CD4-positive, alpha-beta T cell (primary cell): ENCODE measurements at regions of chr3 and their contacts with region 1.

Region 1: DNA sequence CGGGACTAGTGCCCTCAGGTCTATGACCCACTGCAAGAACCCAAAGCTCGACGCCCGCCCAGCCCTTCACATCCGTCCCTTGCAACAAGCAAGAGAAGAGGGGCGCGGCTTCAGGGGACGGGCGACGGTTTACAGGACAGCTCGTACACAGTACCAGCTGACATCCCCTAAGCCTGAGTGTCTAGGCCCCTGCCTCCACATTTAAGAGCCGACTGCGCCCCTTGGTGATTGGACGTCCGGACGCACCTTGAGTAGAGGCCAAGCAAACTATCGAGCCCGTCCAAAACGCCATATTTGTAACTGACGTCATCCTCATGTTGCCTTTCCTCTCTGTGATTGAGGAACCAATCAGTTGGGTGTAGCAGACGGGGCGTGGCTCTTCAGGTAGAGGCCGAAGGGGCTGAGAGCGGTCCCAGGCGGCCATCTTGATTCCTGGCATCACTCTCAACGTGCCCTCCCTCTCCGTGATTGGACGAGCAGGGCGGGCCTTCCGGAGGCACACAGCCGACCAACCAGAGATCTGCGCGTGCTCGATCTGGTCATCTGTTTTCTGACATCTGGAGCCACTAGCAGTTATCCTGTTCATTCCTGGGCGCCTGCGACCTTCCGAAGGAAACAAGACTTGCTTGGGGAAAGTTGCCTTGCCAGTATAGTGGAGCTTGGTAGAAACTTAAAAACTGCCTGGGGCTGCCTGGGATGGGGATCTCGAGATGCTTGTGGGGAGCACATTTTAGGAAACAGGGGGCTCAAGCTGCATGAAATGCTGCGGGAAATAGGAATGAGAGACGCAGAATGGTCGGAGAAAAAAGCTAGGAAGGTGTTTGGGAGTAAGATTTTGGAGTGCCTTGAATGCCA is 4.0 kb upstream of the RPL14 start:
- DNase-seq: peak; percentile 87 to 99 (median 94)
- ATAC-seq: peak; percentile 90
- H3K4me3 ChIP-seq: peak overlapping the region; percentile 84
- H3K4me3 Mint-ChIP-seq: peak overlapping the region; percentile 88
- H3K27ac ChIP-seq: peak overlapping the region; percentile 88 to 97
- H3K27ac Mint-ChIP-seq: peak overlapping the region; percentile 91
- H3K4me1 ChIP-seq: peaks cover 31% of the 10 kb centered on the region
- H3K4me1 Mint-ChIP-seq: peaks cover 43% of the 10 kb centered on the region
- H3K27me3 ChIP-seq: no peaks in the 10 kb centered on the region
- H3K27me3 Mint-ChIP-seq: no peaks in the 10 kb centered on the region
- CTCF ChIP-seq: no peak

Region 2: GRCh38 chr3:39383045-39383880 is 1069.8 kb before region 1 on chr3 and contains the start of gene SLC25A38:
- CTCF ChIA-PET with region 1: no interaction called
- POLR2A ChIA-PET with region 1: no interaction called
- intact Hi-C with region 1: loop called in 1 of 2 experiments (anchors 10 kb)
- DNase-seq: peak; percentile 58 to 94 (median 75)
- ATAC-seq: peak; percentile 82
- H3K4me3 ChIP-seq: peak within 1 kb of the TSS; percentile 95
- H3K4me3 Mint-ChIP-seq: peak within 1 kb of the TSS; percentile 94
- H3K27ac ChIP-seq: peak within 1 kb of the TSS; percentile 93 to 97
- H3K27ac Mint-ChIP-seq: peak within 1 kb of the TSS; percentile 97
- H3K4me1 ChIP-seq: peaks cover 53% of the 10 kb centered on the region
- H3K4me1 Mint-ChIP-seq: peaks cover 55% of the 10 kb centered on the region
- H3K27me3 ChIP-seq: no peaks in the 10 kb centered on the region
- H3K27me3 Mint-ChIP-seq: no peaks in the 10 kb centered on the region
- CTCF ChIP-seq: peak; percentile 59
- total RNA-seq, gene SLC25A38: 43.2 to 44.7 TPM

Region 3: GRCh38 chr3:39515681-39516441 is 937.2 kb before region 1 on chr3:
- CTCF ChIA-PET with region 1: no interaction called
- POLR2A ChIA-PET with region 1: no interaction called
- intact Hi-C with region 1: no loop called
- DNase-seq: no peak
- ATAC-seq: no peak
- H3K4me3 ChIP-seq: no peak overlapping the region
- H3K4me3 Mint-ChIP-seq: no peak overlapping the region
- H3K27ac ChIP-seq: no peak overlapping the region
- H3K27ac Mint-ChIP-seq: no peak overlapping the region
- H3K4me1 ChIP-seq: no peaks in the 10 kb centered on the region
- H3K4me1 Mint-ChIP-seq: no peaks in the 10 kb centered on the region
- H3K27me3 ChIP-seq: peaks cover 0 to under 1% of the 10 kb centered on the region in 2 experiments
- H3K27me3 Mint-ChIP-seq: peaks cover 50% of the 10 kb centered on the region
- CTCF ChIP-seq: no peak

Region 4: GRCh38 chr3:40309418-40309924 is 143.6 kb before region 1 on chr3 and contains the start of gene EIF1B:
- CTCF ChIA-PET with region 1: interaction called, 6 read pairs
- POLR2A ChIA-PET with region 1: interaction called, 16 read pairs
- intact Hi-C with region 1: loop called (anchors 1 to 2 kb)
- DNase-seq: peak; percentile 96 to 99 (median 98)
- ATAC-seq: peak; percentile 89
- H3K4me3 ChIP-seq: peak within 1 kb of the TSS; percentile 93
- H3K4me3 Mint-ChIP-seq: peak within 1 kb of the TSS; percentile 100
- H3K27ac ChIP-seq: peak within 1 kb of the TSS; percentile 91 to 95
- H3K27ac Mint-ChIP-seq: peak within 1 kb of the TSS; percentile 100
- H3K4me1 ChIP-seq: peaks cover 11% of the 10 kb centered on the region
- H3K4me1 Mint-ChIP-seq: peaks cover 50% of the 10 kb centered on the region
- H3K27me3 ChIP-seq: no peaks in the 10 kb centered on the region
- H3K27me3 Mint-ChIP-seq: no peaks in the 10 kb centered on the region
- CTCF ChIP-seq: peak; percentile 90
- total RNA-seq, gene EIF1B: 112 to 120 TPM

Region 5: DNA sequence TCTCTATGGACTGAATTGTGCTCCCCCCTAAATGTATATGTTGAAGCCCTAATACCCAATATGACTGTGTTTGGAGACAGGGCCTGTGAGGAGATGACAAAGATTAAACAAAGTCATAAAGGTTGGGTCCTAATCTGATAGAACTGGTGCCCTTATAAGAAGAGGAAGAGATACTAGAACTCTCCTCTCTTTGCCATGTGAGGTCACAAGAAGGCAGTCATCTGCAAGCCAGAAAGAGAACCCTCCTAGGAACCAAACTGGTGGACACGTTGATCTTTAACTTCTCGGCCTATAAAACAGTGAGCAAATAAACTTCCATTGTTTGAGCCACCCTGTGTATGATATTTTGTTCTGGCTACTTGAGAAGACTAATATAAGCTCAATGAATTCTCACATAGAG is 97.7 kb before region 1 on chr3:
- CTCF ChIA-PET with region 1: no interaction called
- POLR2A ChIA-PET with region 1: no interaction called
- intact Hi-C with region 1: no loop called
- DNase-seq: no peak
- ATAC-seq: no peak
- H3K4me3 ChIP-seq: no peak overlapping the region
- H3K4me3 Mint-ChIP-seq: no peak overlapping the region
- H3K27ac ChIP-seq: no peak overlapping the region
- H3K27ac Mint-ChIP-seq: no peak overlapping the region
- H3K4me1 ChIP-seq: no peaks in the 10 kb centered on the region
- H3K4me1 Mint-ChIP-seq: no peaks in the 10 kb centered on the region
- H3K27me3 ChIP-seq: peaks cover 2 to 5% of the 10 kb centered on the region in 2 experiments
- H3K27me3 Mint-ChIP-seq: peaks cover 43% of the 10 kb centered on the region
- CTCF ChIP-seq: no peak

Region 6: DNA sequence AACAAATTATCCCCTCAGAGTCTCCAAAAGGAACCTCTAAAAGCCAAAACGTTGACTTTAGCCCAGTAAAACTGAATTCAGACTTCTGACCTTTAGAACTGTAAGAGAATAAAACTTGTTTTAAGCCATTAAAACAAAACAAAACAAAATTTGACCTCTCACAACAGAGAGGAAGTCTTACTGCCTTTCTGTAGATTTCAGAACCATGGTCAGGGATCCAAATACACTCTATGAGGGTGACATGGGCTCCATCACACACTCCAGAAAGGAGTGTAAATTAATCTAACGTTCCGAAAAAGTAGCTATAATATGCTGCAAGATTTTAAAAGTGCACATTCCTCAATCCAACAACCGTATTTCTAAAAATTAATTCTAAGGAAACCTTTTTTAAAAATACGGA is 15.2 kb before region 1 on chr3:
- CTCF ChIA-PET with region 1: no interaction called
- POLR2A ChIA-PET with region 1: no interaction called
- intact Hi-C with region 1: no loop called
- DNase-seq: no peak
- ATAC-seq: no peak
- H3K4me3 ChIP-seq: no peak overlapping the region
- H3K4me3 Mint-ChIP-seq: no peak overlapping the region
- H3K27ac ChIP-seq: no peak overlapping the region
- H3K27ac Mint-ChIP-seq: no peak overlapping the region
- H3K4me1 ChIP-seq: no peaks in the 10 kb centered on the region
- H3K4me1 Mint-ChIP-seq: no peaks in the 10 kb centered on the region
- H3K27me3 ChIP-seq: no peaks in the 10 kb centered on the region
- H3K27me3 Mint-ChIP-seq: no peaks in the 10 kb centered on the region
- CTCF ChIP-seq: no peak

Region 7: DNA sequence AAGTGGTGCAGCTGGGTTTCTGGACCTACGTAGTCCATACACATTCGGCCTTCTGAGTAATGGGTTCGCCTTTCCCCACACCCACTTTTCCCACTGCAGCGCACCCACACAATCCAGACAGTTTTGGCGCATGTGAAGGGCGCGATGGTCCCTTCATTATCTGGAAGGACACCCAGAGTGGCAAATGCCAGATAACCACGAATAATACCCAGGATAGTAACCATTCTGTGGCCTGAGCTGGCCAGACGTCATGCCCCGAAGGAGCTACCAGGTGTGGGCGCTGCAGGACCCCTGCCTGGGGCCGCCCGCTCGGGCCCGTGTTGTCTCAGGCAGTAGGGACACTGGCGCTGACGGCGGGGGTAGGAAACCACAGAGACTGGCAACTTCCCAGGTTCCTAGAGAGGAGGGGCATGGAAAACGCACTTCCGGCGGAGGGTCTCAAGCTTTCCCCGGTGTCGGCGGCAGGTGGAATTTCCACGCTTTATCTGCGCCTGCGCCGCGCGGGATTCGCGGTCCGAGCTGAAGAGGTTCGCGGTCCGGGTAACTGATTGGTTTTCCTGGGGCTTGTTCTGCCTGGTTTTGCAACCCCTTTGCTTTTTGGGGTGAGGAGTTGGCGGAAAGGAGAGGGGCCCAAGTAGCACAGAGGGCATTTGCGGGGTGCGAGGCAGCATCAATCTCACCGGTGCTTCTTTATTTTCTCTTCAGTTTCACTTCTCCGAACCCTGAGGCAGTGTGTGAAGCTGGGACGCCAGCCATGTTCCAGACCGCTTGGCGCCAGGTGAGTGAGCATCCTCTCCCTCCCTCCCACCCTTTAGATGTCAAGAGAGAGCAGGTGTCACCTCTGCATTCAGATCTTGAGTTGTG is 52.7 kb after region 1 on chr3 and contains the start of gene ZNF620:
- CTCF ChIA-PET with region 1: interaction called, 6 read pairs
- POLR2A ChIA-PET with region 1: interaction called, 16 read pairs
- intact Hi-C with region 1: no loop called
- DNase-seq: peak; percentile 5 to 73 (median 36)
- ATAC-seq: peak; percentile 69
- H3K4me3 ChIP-seq: peak within 1 kb of the TSS; percentile 83
- H3K4me3 Mint-ChIP-seq: peak within 1 kb of the TSS; percentile 97
- H3K27ac ChIP-seq: no peak within 1 kb of the TSS
- H3K27ac Mint-ChIP-seq: peak within 1 kb of the TSS; percentile 70
- H3K4me1 ChIP-seq: peaks cover 7% of the 10 kb centered on the region
- H3K4me1 Mint-ChIP-seq: peaks cover 23% of the 10 kb centered on the region
- H3K27me3 ChIP-seq: no peaks in the 10 kb centered on the region
- H3K27me3 Mint-ChIP-seq: no peaks in the 10 kb centered on the region
- CTCF ChIP-seq: peak; percentile 31
- total RNA-seq, gene ZNF620: 0.82 to 1.0 TPM

Region 8: GRCh38 chr3:41198950-41199865 is 746.1 kb after region 1 on chr3 and contains the start of gene CTNNB1:
- CTCF ChIA-PET with region 1: no interaction called
- POLR2A ChIA-PET with region 1: interaction called, 9 read pairs
- intact Hi-C with region 1: loop called in 1 of 2 experiments (anchors 2 kb)
- DNase-seq: peak; percentile 86 to 97 (median 91)
- ATAC-seq: peak; percentile 81
- H3K4me3 ChIP-seq: peak within 1 kb of the TSS; percentile 90
- H3K4me3 Mint-ChIP-seq: peak within 1 kb of the TSS; percentile 98
- H3K27ac ChIP-seq: peak within 1 kb of the TSS; percentile 90
- H3K27ac Mint-ChIP-seq: peak within 1 kb of the TSS; percentile 94
- H3K4me1 ChIP-seq: peaks cover 16% of the 10 kb centered on the region
- H3K4me1 Mint-ChIP-seq: peaks cover 45% of the 10 kb centered on the region
- H3K27me3 ChIP-seq: no peaks in the 10 kb centered on the region
- H3K27me3 Mint-ChIP-seq: no peaks in the 10 kb centered on the region
- CTCF ChIP-seq: no peak
- total RNA-seq, gene CTNNB1: 226 to 228 TPM

Region 9: DNA sequence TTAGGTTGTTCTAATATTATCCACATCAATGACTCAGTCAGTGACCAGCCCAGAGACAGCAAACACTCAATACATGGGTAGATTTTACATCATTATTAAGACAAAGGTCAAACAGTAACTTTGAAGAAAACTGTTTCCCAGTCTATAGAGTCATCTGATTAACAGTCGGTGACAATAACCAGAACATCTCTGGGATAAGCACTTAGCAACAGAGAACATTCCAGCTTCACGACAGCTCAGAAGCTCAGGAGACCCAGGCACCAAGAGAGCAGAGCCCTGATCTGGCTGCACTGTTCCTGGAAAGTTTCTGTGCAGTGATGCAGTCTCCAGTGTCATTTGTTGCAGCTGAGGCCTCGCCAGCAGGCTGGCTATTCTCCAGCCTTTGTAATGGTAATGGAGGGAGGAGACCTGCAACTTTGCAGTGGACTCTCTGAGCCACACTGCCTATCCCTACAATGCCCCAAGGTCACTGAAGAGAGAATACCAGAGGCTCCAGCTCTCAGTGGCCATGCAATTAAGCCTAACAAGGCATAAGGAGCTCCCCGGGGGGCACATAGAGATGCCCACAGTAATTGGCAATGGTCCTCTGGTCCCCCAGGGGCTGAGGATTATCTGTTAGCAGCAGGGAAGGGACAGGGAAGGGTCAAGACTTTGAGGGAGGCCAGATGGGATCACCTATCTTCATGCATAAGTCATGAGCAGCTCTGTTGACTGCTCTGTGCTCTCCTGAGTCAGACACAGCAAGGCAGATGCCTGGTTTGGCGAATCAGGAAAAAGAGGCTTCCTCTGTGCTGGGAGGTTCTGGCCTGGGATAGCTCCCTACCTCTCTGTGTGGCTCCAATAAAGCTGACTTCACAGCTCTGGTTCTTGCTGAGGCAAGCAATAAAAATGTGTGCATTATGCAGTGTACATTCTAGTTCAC is 909.8 kb after region 1 on chr3:
- CTCF ChIA-PET with region 1: no interaction called
- POLR2A ChIA-PET with region 1: no interaction called
- intact Hi-C with region 1: no loop called
- DNase-seq: no peak
- ATAC-seq: no peak
- H3K4me3 ChIP-seq: no peak overlapping the region
- H3K4me3 Mint-ChIP-seq: no peak overlapping the region
- H3K27ac ChIP-seq: no peak overlapping the region
- H3K27ac Mint-ChIP-seq: no peak overlapping the region
- H3K4me1 ChIP-seq: no peaks in the 10 kb centered on the region
- H3K4me1 Mint-ChIP-seq: no peaks in the 10 kb centered on the region
- H3K27me3 ChIP-seq: no peaks in the 10 kb centered on the region
- H3K27me3 Mint-ChIP-seq: no peaks in the 10 kb centered on the region
- CTCF ChIP-seq: no peak